ENCODE measurements at regions of chr19 and their contacts with region 1.

Region 1: GRCh38 chr19:45692187-45693105 is at the start of gene QPCTL:
- DNase-seq: peak; percentile 90
- ATAC-seq: peak; percentile 86
- H3K4me3 Mint-ChIP-seq: peak within 1 kb of the TSS; percentile 94
- H3K27ac Mint-ChIP-seq: peak within 1 kb of the TSS; percentile 98
- H3K4me1 Mint-ChIP-seq: peaks cover 30% of the 10 kb centered on the region
- H3K27me3 Mint-ChIP-seq: no peaks in the 10 kb centered on the region
- CTCF ChIP-seq: no peak
- total RNA-seq, gene QPCTL: 19.3 and 21.1 TPM in 2 replicates

Region 2: GRCh38 chr19:45506246-45506990 is 186.0 kb before region 1 on chr19:
- CTCF ChIA-PET with region 1: interaction called, 4 read pairs
- POLR2A ChIA-PET with region 1: interaction called, 5 read pairs
- intact Hi-C with region 1: loop called (anchors 2 kb)
- DNase-seq: peak; percentile 99
- ATAC-seq: peak; percentile 72
- H3K4me3 Mint-ChIP-seq: peak overlapping the region; percentile 92
- H3K27ac Mint-ChIP-seq: peak overlapping the region; percentile 97
- H3K4me1 Mint-ChIP-seq: peaks cover 54% of the 10 kb centered on the region
- H3K27me3 Mint-ChIP-seq: no peaks in the 10 kb centered on the region
- CTCF ChIP-seq: no peak

Region 3: GRCh38 chr19:45528651-45529419 is 163.6 kb before region 1 on chr19:
- CTCF ChIA-PET with region 1: no interaction called
- POLR2A ChIA-PET with region 1: no interaction called
- intact Hi-C with region 1: no loop called
- DNase-seq: no peak
- ATAC-seq: peak; percentile 31
- H3K4me3 Mint-ChIP-seq: peak overlapping the region; percentile 44
- H3K27ac Mint-ChIP-seq: peak overlapping the region; percentile 41
- H3K4me1 Mint-ChIP-seq: peaks cover 24% of the 10 kb centered on the region
- H3K27me3 Mint-ChIP-seq: no peaks in the 10 kb centered on the region
- CTCF ChIP-seq: no peak

Region 4: DNA sequence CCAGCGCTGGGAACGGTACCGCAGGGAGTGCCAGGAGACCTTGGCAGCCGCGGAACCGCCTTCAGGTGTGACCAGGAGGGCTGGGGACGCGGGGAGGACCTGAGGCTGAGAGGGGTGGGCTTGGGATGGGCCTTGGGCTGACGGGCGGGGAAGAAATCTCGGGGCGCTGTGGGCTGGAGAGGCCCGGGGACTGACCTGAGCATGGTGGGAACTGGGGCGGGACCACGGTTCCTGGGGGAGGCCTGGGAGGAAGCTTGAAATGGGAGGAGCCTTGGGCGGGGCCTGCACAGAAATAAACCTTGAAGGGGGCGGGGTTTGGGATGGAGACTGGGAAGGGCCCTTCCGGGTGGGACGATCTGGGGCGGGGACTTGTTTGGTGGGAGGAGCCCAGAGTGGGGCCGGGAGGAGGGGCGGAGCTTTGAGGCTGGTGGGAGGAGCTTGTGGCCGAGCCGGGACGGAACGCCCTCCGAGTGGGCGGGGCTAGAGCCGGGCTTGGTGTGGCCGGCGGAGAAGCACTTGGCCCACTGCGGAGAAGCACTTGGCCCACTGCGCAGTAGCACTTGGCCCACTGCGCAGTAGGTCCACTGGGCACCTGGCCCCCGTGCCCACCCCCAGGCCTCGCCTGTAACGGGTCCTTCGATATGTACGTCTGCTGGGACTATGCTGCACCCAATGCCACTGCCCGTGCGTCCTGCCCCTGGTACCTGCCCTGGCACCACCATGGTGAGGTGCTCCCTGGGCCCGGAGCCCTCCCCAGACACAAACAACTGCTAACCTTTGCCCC is 21.6 kb before region 1 on chr19:
- CTCF ChIA-PET with region 1: no interaction called
- POLR2A ChIA-PET with region 1: interaction called, 26 read pairs
- intact Hi-C with region 1: loop called (anchors 2 kb)
- DNase-seq: peak; percentile 47
- ATAC-seq: peak; percentile 61
- H3K4me3 Mint-ChIP-seq: peak overlapping the region; percentile 52
- H3K27ac Mint-ChIP-seq: no peak overlapping the region
- H3K4me1 Mint-ChIP-seq: peaks cover 32% of the 10 kb centered on the region
- H3K27me3 Mint-ChIP-seq: peaks cover 27% of the 10 kb centered on the region
- CTCF ChIP-seq: no peak

Region 5: GRCh38 chr19:45711851-45712698 is 19.6 kb after region 1 on chr19:
- CTCF ChIA-PET with region 1: interaction called, 36 read pairs
- POLR2A ChIA-PET with region 1: interaction called, 123 read pairs
- intact Hi-C with region 1: loop called (anchors 1 kb)
- DNase-seq: no peak
- ATAC-seq: no peak
- H3K4me3 Mint-ChIP-seq: no peak overlapping the region
- H3K27ac Mint-ChIP-seq: no peak overlapping the region
- H3K4me1 Mint-ChIP-seq: peaks cover 40% of the 10 kb centered on the region
- H3K27me3 Mint-ChIP-seq: no peaks in the 10 kb centered on the region
- CTCF ChIP-seq: no peak

Region 6: GRCh38 chr19:45770192-45771101 is 78.0 kb after region 1 on chr19:
- CTCF ChIA-PET with region 1: interaction called, 8 read pairs
- POLR2A ChIA-PET with region 1: interaction called, 24 read pairs
- intact Hi-C with region 1: loop called (anchors 1 kb)
- DNase-seq: peak; percentile 93
- ATAC-seq: peak; percentile 69
- H3K4me3 Mint-ChIP-seq: peak overlapping the region; percentile 89
- H3K27ac Mint-ChIP-seq: peak overlapping the region; percentile 88
- H3K4me1 Mint-ChIP-seq: peaks cover 19% of the 10 kb centered on the region
- H3K27me3 Mint-ChIP-seq: peaks cover 3% of the 10 kb centered on the region
- CTCF ChIP-seq: peak; percentile 71